Posterior vena cava (tissue), 2 donors: ENCODE measurements at regions of chr5 and their contacts with region 1.

Region 1: GRCh38 chr5:6632917-6633468 is at the starts of genes NSUN2 and SRD5A1:
- DNase-seq: peak; percentile 97
- total RNA-seq, gene NSUN2: 31.6 to 35.2 TPM
- total RNA-seq, gene SRD5A1: 4.0 to 4.2 TPM

Region 2: DNA sequence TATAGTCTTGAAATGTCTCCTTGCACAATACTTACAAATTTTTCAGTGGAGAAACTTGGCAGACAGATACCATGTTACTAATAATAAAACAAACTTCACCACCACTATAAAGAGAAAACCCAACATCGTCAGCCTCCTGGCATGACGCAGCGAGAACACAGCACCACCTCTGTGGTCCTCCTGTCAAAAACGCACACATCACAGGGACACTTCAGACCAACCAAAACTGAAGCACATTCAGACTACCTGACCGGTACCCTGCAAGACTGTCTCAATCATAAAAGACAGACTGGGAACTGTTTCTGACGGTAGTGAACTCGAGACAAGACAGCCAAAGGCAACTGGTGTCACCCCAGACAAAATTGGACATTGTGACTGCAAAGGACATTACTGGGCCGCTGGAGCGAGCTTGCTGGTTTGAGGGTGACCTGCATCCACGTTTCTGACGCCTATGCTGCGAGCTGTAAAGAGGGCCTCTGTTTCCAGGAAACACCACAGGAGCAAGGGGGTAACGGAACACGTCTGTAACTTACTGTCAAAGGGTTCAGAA is 34.6 kb before region 1 on chr5:
- intact Hi-C with region 1: no loop called
- DNase-seq: no peak

Region 3: GRCh38 chr5:6704361-6704851 is 71.4 kb after region 1 on chr5:
- intact Hi-C with region 1: loop called (anchors 10 kb)
- DNase-seq: no peak